ENCODE measurements at regions of chr12 and their contacts with region 1.

Region 1: GRCh38 chr12:57904848-57905811 is 36.2 kb upstream of the ATP23 start:
- DNase-seq: peak; percentile 94
- H3K4me3 ChIP-seq: peak overlapping the region in 2 of 4 donors; percentile 18 to 28
- H3K27ac ChIP-seq: peak overlapping the region in 2 of 4 donors; percentile 23 to 58
- H3K4me1 ChIP-seq: peaks cover 0 to 5% (median 0%) of the 10 kb centered on the region in 4 donors
- H3K27me3 ChIP-seq: no peaks in the 10 kb centered on the region
- CTCF ChIP-seq: peak; percentile 100
- EP300 ChIP-seq: no peak
- POLR2A ChIP-seq: no peak

Region 2: DNA sequence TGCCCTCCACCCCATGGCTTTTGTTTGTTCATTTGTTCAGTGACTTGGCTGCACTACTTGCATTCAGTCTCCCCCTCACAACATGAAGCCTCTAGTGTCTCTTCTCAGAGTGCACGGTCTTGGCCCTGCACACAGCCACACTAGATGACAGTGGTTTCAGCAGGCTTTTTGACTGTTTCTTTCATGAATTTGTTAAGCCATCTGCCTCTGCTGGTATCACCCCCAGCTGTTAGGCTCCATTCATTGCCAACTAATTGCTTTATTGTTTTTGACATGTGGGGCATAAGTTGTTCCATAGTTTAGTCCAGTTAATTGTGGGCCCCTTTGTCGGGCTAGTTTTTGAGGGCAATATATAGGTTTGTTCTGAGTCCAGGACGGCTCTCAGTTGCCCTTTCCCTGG is 192.4 kb before region 1 on chr12:
- intact Hi-C with region 1: no loop called
- DNase-seq: no peak
- H3K4me3 ChIP-seq: no peak overlapping the region
- H3K27ac ChIP-seq: no peak overlapping the region
- H3K4me1 ChIP-seq: no peaks in the 10 kb centered on the region
- H3K27me3 ChIP-seq: no peaks in the 10 kb centered on the region
- CTCF ChIP-seq: no peak
- EP300 ChIP-seq: no peak
- POLR2A ChIP-seq: no peak

Region 3: GRCh38 chr12:57782608-57783465 is 122.3 kb before region 1 on chr12 and contains the start of gene TSFM:
- intact Hi-C with region 1: loop called (anchors 1 kb)
- DNase-seq: peak; percentile 97
- H3K4me3 ChIP-seq: peak within 1 kb of the TSS; percentile 56 to 99 (median 80)
- H3K27ac ChIP-seq: peak within 1 kb of the TSS; percentile 61 to 86 (median 75)
- H3K4me1 ChIP-seq: peaks cover 0 to 19% (median 14%) of the 10 kb centered on the region in 4 donors
- H3K27me3 ChIP-seq: no peaks in the 10 kb centered on the region
- CTCF ChIP-seq: peak; percentile 80 to 94 (median 92)
- EP300 ChIP-seq: peak in 1 of 4 donors; percentile 41
- POLR2A ChIP-seq: peak in 1 of 2 donors; percentile 26
- total RNA-seq, gene TSFM: 8.0 to 29.6 (median 25.3) TPM

Region 4: GRCh38 chr12:57803319-57803893 is 101.7 kb before region 1 on chr12:
- intact Hi-C with region 1: loop called (anchors 1 kb)
- DNase-seq: no peak
- H3K4me3 ChIP-seq: no peak overlapping the region
- H3K27ac ChIP-seq: peak overlapping the region in 1 of 4 donors; percentile 38
- H3K4me1 ChIP-seq: peaks cover 0 to 8% (median 5%) of the 10 kb centered on the region in 4 donors
- H3K27me3 ChIP-seq: no peaks in the 10 kb centered on the region
- CTCF ChIP-seq: peak; percentile 47 to 82 (median 68)
- EP300 ChIP-seq: no peak
- POLR2A ChIP-seq: no peak

Region 5: DNA sequence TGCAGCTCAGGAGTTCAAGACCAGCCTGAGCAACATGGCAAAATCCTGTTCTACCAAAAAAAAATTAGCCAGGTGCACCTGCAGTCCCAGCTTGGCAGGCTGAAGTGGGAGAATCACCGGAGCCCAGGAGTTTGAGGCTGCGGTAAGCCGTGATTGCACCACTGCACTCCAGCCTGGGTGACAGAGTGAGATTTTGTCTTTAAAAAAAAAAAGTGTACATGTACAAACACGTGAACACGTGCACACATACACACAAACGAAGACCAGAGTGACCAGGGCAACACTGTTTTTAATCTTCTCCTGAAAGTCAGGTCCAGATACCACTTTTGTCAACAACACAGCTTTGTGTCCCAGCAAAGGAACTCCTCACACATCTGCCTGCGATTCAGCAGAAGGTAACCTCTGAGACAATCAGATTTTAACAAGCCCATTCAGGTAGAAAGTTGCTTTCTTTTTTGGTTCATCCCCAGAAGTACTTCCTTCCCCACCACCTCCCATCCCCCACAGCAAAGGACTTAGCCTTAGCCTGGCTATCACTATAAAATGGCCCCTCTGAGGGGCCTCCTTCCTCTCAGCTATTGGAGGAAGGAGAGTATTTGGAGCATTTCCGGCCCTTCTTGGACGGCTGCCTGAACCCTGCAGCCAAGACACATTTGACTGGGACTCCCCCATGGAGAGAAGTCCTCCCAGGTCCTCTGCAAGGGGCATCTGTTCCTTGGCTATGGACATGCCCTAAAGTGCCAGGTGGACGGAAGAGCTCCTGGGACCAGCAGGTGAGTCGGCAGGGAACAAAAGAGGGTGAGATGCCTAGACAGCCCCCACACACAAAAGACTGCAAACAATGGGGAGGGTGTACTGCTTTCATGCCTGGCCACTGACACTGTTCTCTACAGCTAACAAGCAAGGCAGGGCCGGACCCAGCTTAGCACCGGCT is 68.4 kb before region 1 on chr12:
- intact Hi-C with region 1: loop called (anchors 1 kb)
- DNase-seq: peak; percentile 89
- H3K4me3 ChIP-seq: peak overlapping the region in 3 of 4 donors; percentile 14 to 24 (median 20)
- H3K27ac ChIP-seq: peak overlapping the region; percentile 64 to 100 (median 100)
- H3K4me1 ChIP-seq: peaks cover 0 to 100% (median 99%) of the 10 kb centered on the region in 4 donors
- H3K27me3 ChIP-seq: no peaks in the 10 kb centered on the region
- CTCF ChIP-seq: no peak
- EP300 ChIP-seq: no peak
- POLR2A ChIP-seq: no peak